Activated B cell treated with CpG ODN at 0.5 μM for 24 hours (primary cell): ENCODE measurements at regions of chr12 and their contacts with region 1.

Region 1: DNA sequence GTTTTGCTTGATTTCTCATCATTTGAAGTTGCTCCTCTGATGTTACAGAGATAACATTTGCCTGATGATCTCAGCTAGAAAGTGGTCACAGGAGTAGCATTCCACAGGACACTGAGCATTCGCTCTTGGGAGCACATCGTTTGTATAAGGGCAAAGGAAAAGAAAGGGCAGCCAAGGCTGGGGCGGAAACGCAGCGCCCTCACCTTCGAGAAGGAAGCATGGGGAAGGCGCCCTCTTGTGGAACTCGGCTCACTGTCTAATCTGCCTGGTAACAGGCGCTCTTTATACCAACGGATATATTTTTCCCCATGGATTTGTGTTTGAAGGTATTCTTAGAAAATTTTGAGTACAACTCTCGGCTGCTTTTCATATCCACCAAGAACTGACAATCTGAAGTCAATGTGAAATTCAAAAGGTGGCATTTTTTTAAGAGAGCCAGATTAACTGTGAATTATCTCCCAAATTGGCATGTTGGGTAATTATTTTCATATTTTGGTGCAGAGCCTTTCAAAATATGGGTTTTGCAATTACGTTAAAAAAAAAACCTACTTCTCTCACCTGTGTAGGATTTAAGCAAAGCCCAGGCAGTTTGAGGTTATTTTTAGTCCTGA is 172.7 kb downstream of the CAND1 start:
- DNase-seq: peak; percentile 56
- ATAC-seq: peak; percentile 93
- H3K4me3 Mint-ChIP-seq: peak overlapping the region; percentile 5
- H3K27ac Mint-ChIP-seq: no peak overlapping the region
- H3K4me1 Mint-ChIP-seq: peaks cover 8% of the 10 kb centered on the region
- H3K27me3 Mint-ChIP-seq: peaks cover 3% of the 10 kb centered on the region
- CTCF ChIP-seq: no peak

Region 2: GRCh38 chr12:67161322-67161918 is 280.4 kb before region 1 on chr12:
- CTCF ChIA-PET with region 1: no interaction called
- POLR2A ChIA-PET with region 1: no interaction called
- intact Hi-C with region 1: loop called (anchors 2 kb)
- DNase-seq: no peak
- ATAC-seq: no peak
- H3K4me3 Mint-ChIP-seq: no peak overlapping the region
- H3K27ac Mint-ChIP-seq: no peak overlapping the region
- H3K4me1 Mint-ChIP-seq: no peaks in the 10 kb centered on the region
- H3K27me3 Mint-ChIP-seq: peaks cover 7% of the 10 kb centered on the region
- CTCF ChIP-seq: no peak

Region 3: DNA sequence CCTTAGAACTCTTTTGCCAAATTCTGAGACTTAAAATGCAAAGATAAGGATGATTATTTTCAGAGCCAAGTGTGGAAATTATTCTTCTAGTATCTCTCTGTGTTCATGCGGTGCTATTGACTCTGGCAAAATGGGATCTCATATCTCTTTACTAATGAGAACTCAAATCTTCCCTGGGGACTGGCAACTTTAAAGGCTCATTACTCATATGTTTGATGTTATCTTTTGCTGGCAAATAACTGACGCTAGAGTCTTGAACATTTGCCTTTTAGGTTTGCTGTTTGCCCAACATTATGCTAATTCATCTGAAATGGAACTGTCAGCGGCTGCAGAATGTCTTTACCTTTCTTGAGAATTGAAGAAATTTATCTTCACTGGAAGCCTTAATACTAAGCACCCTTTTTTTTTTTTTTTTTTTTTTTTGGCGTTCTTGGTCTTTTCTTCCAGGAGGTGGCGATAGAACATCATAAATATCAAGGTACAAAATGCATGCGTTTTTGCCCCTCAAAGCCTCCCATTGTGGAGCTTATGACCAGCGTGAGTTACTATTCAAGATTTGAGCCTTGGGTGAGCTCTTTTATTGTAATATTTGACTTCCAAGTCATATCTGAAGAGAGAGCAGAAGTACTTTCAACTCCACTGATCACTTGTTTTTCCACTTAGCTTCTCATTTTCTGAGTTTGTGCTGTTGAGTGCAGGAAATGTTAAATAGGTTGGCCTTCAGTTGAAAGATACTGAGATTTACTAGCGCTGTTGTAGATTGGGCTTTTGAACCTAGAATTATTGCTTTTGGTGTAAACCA is 86.1 kb before region 1 on chr12:
- CTCF ChIA-PET with region 1: interaction called, 11 read pairs
- POLR2A ChIA-PET with region 1: no interaction called
- intact Hi-C with region 1: loop called (anchors 1 kb)
- DNase-seq: no peak
- ATAC-seq: peak; percentile 54
- H3K4me3 Mint-ChIP-seq: no peak overlapping the region
- H3K27ac Mint-ChIP-seq: no peak overlapping the region
- H3K4me1 Mint-ChIP-seq: peaks cover 5% of the 10 kb centered on the region
- H3K27me3 Mint-ChIP-seq: no peaks in the 10 kb centered on the region
- CTCF ChIP-seq: no peak

Region 4: GRCh38 chr12:67758119-67758518 is 316.3 kb after region 1 on chr12:
- CTCF ChIA-PET with region 1: no interaction called
- POLR2A ChIA-PET with region 1: no interaction called
- intact Hi-C with region 1: loop called (anchors 5 kb)
- DNase-seq: no peak
- ATAC-seq: peak; percentile 95
- H3K4me3 Mint-ChIP-seq: no peak overlapping the region
- H3K27ac Mint-ChIP-seq: no peak overlapping the region
- H3K4me1 Mint-ChIP-seq: peaks cover 25% of the 10 kb centered on the region
- H3K27me3 Mint-ChIP-seq: no peaks in the 10 kb centered on the region
- CTCF ChIP-seq: no peak